Endothelial cell of umbilical vein (primary cell): ENCODE measurements at regions of chr13 and their contacts with region 1.

Region 1: DNA sequence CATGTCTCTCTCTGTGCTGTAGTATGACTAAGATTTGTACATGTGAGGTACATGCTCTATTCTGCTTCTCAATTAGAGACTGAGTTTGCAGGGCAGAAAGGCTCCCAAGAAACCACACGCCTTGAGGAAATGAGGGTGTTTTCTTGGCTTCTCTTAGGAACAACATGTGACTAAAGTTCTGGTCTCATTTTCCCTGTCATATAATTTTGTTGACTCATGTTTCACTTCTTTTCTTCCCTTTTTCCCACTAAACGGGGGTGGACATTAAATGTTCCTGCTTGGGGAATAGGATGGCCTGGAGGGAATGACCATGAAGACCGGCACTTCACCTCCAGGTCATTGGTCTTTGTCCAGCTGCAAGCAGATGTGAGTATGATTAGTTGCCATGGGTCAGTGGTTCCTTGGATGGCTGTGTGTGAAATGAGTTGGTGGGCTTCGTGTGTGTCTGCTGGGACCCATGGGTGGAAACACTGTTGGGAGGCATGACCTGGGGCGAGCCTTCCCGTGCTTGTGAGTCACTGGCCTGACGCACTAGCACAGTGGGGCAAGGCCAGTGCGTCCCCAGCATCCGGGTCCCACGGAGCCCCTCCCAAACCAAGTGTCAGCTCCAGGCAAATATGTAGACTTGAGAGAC is 56.6 kb downstream of the COL4A1 start:
- DNase-seq: peak; percentile 64
- H3K4me3 ChIP-seq: no peak overlapping the region
- H3K27ac ChIP-seq: peak overlapping the region; percentile 77
- H3K4me1 ChIP-seq: peaks cover 38% of the 10 kb centered on the region
- H3K27me3 ChIP-seq: no peaks in the 10 kb centered on the region
- CTCF ChIP-seq: no peak
- POLR2A ChIP-seq: no peak

Region 2: DNA sequence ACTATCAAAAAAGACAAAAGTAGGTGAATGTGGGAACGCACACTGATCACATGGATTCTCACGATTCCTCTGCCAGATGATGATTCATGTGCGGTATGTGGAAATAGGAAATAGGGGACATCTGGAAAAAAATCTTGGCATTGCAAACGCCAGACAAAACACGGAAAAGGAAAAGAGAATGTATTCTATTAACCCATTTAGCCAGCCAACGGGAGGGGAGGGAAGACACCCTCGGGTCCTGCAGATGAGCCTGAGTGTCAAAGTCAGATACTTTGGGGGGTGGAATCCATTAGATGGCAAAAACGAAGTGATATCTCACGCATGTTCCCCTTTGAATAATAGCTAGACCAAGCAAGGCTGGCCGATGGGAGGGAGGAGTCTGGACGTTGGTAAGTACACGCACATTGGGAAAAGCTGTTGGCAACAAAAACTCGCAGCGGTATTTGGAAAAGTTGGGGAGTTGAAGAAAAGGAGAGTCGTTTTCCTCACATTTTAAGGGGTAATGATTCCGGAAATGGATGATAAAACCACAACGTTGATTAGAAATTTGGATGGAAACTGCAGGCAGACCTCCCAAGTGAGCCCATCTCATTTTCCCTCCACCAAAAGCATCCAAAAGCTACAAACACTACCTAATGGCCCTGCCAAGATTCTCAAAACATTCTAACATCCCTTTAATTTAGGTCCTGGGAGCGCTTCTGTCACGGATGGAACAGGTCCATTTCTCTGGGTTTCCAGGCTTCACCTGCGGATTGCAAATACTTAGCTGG is 17.0 kb before region 1 on chr13:
- CTCF ChIA-PET with region 1: interaction called, 48 read pairs
- POLR2A ChIA-PET with region 1: interaction called, 3 read pairs
- dilution Hi-C with region 1: no loop called
- intact Hi-C with region 1: loop called (anchors 2 kb)
- DNase-seq: peak; percentile 93
- H3K4me3 ChIP-seq: peak overlapping the region in 1 of 3 experiments; percentile 31
- H3K27ac ChIP-seq: peak overlapping the region; percentile 90
- H3K4me1 ChIP-seq: peaks cover 29% of the 10 kb centered on the region
- H3K27me3 ChIP-seq: no peaks in the 10 kb centered on the region
- CTCF ChIP-seq: no peak
- POLR2A ChIP-seq: peak; percentile 57

Region 3: DNA sequence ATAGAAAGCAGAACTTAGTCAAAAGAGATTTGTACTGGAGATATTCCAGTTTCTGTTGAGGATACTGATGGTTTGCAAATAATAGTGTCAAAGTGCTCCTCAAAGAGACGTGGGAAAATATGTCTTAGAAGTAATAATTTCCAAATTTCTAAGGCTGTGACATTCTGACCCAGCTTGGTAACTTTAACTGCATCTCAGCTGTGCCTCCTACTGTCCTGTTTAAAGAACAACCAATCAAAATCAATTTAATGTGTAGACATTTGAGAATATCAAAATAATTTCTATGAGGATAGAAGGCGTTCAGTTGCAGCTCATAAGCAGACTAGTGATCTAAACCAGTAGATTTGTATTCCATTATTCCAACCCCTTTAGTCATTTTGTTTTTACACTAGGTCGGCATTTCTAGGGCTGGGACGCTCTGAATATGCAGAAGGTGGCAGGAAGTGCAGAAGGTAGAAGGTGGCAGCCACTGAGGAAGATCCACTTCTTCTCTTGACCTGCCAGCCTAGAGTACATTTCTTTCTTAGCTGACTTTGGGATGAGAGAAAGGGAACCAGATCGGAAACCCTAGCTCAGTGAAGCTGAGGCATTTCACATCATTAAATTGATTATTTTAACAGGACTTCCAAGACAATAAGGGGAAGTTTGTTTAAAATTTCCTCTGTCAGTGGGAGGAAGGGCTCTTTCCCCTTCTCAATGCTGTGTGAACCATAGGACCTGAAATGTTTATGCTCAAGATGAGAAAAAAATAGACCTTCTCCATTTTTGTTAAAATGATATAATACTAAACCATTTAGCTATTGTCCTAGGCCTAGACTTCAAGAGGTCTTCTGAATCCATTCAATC is 10.9 kb before region 1 on chr13:
- CTCF ChIA-PET with region 1: interaction called, 48 read pairs
- POLR2A ChIA-PET with region 1: no interaction called
- dilution Hi-C with region 1: no loop called
- intact Hi-C with region 1: no loop called
- DNase-seq: peak; percentile 82
- H3K4me3 ChIP-seq: peak overlapping the region in 1 of 3 experiments; percentile 8
- H3K27ac ChIP-seq: peak overlapping the region; percentile 54
- H3K4me1 ChIP-seq: peaks cover 25% of the 10 kb centered on the region
- H3K27me3 ChIP-seq: no peaks in the 10 kb centered on the region
- CTCF ChIP-seq: peak in 1 of 2 donors; percentile 11
- POLR2A ChIP-seq: no peak

Region 4: DNA sequence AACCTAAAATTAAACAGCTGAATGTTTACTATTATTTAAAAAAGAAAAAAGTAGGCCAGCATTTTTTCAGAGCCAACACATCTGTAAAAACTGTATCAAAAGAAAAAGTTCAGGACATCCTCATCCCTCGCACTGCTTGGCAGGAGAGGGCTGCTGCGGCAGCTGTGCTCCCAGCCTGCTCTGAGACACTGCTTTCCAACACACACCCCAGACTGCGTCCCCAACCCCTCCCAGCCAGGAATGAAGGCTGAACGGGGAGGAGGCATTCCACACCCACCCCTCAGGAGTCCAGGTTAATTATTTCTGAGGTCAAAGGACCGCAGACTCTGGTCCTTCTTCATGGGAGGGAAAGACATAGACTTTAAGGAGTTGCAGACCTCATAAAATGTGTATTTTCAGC is 13.5 kb after region 1 on chr13:
- CTCF ChIA-PET with region 1: interaction called, 33 read pairs
- POLR2A ChIA-PET with region 1: interaction called, 5 read pairs
- dilution Hi-C with region 1: no loop called
- intact Hi-C with region 1: loop called (anchors 1 kb)
- DNase-seq: no peak
- H3K4me3 ChIP-seq: no peak overlapping the region
- H3K27ac ChIP-seq: peak overlapping the region; percentile 25
- H3K4me1 ChIP-seq: peaks cover 85% of the 10 kb centered on the region
- H3K27me3 ChIP-seq: no peaks in the 10 kb centered on the region
- CTCF ChIP-seq: no peak
- POLR2A ChIP-seq: no peak

Region 5: DNA sequence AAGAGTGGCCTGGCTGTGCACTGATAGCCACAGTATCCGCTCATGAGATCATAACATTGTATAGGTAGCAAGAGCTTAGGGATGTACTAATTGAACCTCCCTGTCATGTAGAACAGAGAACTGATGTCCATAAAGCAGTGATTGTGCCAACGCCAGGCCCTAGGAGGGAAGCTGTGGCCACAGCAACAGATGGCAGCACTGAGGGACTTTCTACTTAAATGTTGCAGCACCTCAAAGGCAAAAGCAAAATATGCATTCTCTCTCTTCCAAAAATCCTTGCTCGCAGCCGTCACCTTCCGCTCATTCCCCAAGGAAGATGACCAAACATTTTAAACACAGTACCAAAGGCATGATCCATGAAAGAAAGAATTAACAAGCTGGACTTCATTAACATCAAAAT is 24.3 kb after region 1 on chr13:
- CTCF ChIA-PET with region 1: interaction called, 10 read pairs
- POLR2A ChIA-PET with region 1: no interaction called
- dilution Hi-C with region 1: no loop called
- intact Hi-C with region 1: no loop called
- DNase-seq: no peak
- H3K4me3 ChIP-seq: no peak overlapping the region
- H3K27ac ChIP-seq: no peak overlapping the region
- H3K4me1 ChIP-seq: no peaks in the 10 kb centered on the region
- H3K27me3 ChIP-seq: no peaks in the 10 kb centered on the region
- CTCF ChIP-seq: peak in 1 of 2 donors; percentile 5
- POLR2A ChIP-seq: no peak

Region 6: GRCh38 chr13:110298505-110299282 is 48.3 kb after region 1 on chr13:
- CTCF ChIA-PET with region 1: interaction called, 42 read pairs
- POLR2A ChIA-PET with region 1: no interaction called
- dilution Hi-C with region 1: no loop called
- intact Hi-C with region 1: no loop called
- DNase-seq: peak; percentile 54
- H3K4me3 ChIP-seq: peak overlapping the region in 1 of 3 experiments; percentile 20
- H3K27ac ChIP-seq: peak overlapping the region; percentile 23
- H3K4me1 ChIP-seq: peaks cover 61% of the 10 kb centered on the region
- H3K27me3 ChIP-seq: no peaks in the 10 kb centered on the region
- CTCF ChIP-seq: no peak
- POLR2A ChIP-seq: peak; percentile 4